ENCODE measurements at regions of chr11 and their contacts with region 1.

Region 1: GRCh38 chr11:77530879-77531278 is 57.0 kb upstream of the PAK1 start:
- DNase-seq: no peak
- H3K4me3 ChIP-seq: no peak overlapping the region
- H3K27ac ChIP-seq: no peak overlapping the region
- H3K4me1 ChIP-seq: no peaks in the 10 kb centered on the region
- H3K27me3 ChIP-seq: no peaks in the 10 kb centered on the region
- CTCF ChIP-seq: no peak

Region 2: DNA sequence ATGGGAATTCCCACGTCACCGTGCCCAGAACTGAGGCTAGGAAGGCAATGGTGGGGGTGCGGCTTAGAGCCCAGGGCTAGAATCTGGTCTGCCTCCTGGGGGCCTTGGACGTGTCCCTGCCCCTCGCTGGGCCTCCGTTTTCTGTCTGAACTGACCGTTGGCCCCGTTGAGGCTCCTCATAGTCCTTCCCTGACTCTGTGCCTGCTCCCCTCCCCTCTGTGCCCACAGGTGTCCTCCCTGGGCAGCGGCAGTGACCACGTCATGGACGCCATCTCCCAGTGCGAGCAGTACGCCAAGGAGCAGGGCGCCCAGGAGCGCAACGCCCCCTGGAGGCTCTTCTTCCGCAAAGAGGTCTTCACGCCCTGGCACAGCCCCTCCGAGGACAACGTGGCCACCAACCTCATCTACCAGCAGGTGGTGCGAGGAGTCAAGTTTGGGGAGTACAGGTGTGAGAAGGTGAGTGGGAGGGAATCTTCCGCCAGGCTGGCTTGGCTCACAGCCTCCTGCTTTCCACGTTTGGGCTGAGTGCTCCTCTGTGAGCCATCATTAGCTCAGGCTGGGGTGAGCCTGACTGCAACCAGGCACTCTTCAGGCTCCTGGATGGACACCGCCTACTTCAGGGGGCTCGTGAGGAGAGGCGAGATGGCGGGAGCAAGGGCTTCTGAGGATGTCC is 338.9 kb before region 1 on chr11:
- intact Hi-C with region 1: loop called (anchors 10 kb)
- DNase-seq: peak; percentile 82 to 96 (median 91)
- H3K4me3 ChIP-seq: peak overlapping the region in 2 of 3 donors; percentile 28 to 33
- H3K27ac ChIP-seq: no peak overlapping the region
- H3K4me1 ChIP-seq: peaks cover 0 to 7% (median 0%) of the 10 kb centered on the region in 3 donors
- H3K27me3 ChIP-seq: no peaks in the 10 kb centered on the region
- CTCF ChIP-seq: peak; percentile 58

Measured in kidney (tissue), 22 donors.